Naive thymus-derived CD4-positive, alpha-beta T cell (primary cell): ENCODE measurements at regions of chr9 and their contacts with region 1.

Region 1: GRCh38 chr9:105881654-105882349 is 187.5 kb downstream of the TMEM38B start:
- DNase-seq: peak; percentile 16 to 64 (median 52)
- ATAC-seq: peak; percentile 65
- H3K4me3 ChIP-seq: no peak overlapping the region
- H3K4me3 Mint-ChIP-seq: no peak overlapping the region
- H3K27ac ChIP-seq: no peak overlapping the region
- H3K27ac Mint-ChIP-seq: no peak overlapping the region
- H3K4me1 ChIP-seq: no peaks in the 10 kb centered on the region
- H3K4me1 Mint-ChIP-seq: peaks cover 0 to 26% (median 4%) of the 10 kb centered on the region in 7 donors
- H3K27me3 ChIP-seq: no peaks in the 10 kb centered on the region
- H3K27me3 Mint-ChIP-seq: peaks cover 4 to 39% (median 10%) of the 10 kb centered on the region in 5 donors

Region 2: DNA sequence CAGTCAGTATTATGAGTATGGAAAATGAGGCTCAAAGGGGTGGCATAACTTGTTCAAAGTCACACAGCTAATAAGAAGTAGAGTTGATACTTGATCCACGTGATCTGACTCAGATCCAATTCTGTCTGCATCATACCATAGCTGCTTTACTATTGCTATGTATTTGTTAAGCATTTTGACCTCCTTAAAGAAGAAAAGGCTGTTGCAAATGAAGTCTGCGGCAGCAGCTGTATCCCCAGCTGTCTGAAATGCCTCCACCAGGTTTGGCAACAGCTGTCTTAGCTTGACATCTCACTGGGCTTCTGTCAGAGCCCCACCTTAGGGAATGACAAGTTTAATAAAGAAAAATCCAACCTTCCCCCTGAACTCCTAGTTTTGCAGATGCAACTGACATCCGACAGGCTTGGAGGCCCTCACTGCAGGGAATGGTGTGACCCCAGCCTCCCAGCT is 712.9 kb before region 1 on chr9:
- CTCF ChIA-PET with region 1: no interaction called
- POLR2A ChIA-PET with region 1: no interaction called
- intact Hi-C with region 1: no loop called
- DNase-seq: no peak
- ATAC-seq: no peak
- H3K4me3 ChIP-seq: no peak overlapping the region
- H3K4me3 Mint-ChIP-seq: no peak overlapping the region
- H3K27ac ChIP-seq: no peak overlapping the region
- H3K27ac Mint-ChIP-seq: no peak overlapping the region
- H3K4me1 ChIP-seq: no peaks in the 10 kb centered on the region
- H3K4me1 Mint-ChIP-seq: no peaks in the 10 kb centered on the region
- H3K27me3 ChIP-seq: no peaks in the 10 kb centered on the region
- H3K27me3 Mint-ChIP-seq: peaks cover 0 to 5% (median 0%) of the 10 kb centered on the region in 5 donors

Region 3: DNA sequence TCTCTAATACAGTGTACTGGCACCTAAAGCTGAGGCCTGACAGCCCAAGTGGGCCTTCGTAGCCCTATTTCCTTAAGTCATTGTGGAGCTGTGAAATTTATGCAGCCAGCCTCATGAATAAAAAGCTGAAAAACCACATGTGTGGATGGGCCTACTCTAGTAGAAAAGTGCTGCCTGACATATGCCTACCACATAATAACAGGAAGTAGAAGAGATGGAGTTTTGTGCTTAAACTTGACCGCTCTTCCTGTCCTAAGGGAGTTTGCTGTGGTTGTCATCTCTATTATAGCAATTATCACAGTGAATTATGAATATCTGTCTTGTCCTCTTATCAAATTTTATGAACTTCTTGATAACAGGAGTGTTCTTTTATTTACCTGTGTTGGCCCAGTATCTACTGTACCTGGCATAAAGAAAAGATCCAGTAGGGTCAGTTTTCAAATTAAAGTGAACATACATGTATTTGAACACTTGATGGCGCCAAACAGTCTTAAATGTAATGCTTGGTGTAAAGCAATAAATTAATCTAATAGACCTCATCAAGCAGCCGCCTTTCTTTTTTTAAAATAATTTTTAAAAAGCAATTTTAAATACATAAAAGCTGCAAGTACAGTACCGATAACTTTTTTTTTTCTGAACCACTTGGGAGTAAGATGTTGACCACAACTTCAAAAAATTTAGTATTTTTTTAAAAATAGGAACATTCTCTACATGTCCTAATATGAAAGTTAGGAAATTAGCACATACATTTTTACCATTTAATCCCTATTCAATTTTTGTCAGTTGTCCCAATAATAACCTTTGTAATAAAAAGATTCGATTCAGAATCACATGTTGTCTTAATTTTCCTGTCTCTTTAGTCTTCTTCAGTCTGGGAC is 272.8 kb before region 1 on chr9:
- CTCF ChIA-PET with region 1: interaction called, 3 read pairs
- POLR2A ChIA-PET with region 1: no interaction called
- intact Hi-C with region 1: loop called in 1 of 2 experiments (anchors 1 kb)
- DNase-seq: peak in 6 of 9 donors; percentile 11 to 37 (median 30)
- ATAC-seq: peak; percentile 67
- H3K4me3 ChIP-seq: no peak overlapping the region
- H3K4me3 Mint-ChIP-seq: no peak overlapping the region
- H3K27ac ChIP-seq: no peak overlapping the region
- H3K27ac Mint-ChIP-seq: no peak overlapping the region
- H3K4me1 ChIP-seq: no peaks in the 10 kb centered on the region
- H3K4me1 Mint-ChIP-seq: peaks cover 0 to 5% (median 0%) of the 10 kb centered on the region in 7 donors
- H3K27me3 ChIP-seq: no peaks in the 10 kb centered on the region
- H3K27me3 Mint-ChIP-seq: no peaks in the 10 kb centered on the region

Region 4: DNA sequence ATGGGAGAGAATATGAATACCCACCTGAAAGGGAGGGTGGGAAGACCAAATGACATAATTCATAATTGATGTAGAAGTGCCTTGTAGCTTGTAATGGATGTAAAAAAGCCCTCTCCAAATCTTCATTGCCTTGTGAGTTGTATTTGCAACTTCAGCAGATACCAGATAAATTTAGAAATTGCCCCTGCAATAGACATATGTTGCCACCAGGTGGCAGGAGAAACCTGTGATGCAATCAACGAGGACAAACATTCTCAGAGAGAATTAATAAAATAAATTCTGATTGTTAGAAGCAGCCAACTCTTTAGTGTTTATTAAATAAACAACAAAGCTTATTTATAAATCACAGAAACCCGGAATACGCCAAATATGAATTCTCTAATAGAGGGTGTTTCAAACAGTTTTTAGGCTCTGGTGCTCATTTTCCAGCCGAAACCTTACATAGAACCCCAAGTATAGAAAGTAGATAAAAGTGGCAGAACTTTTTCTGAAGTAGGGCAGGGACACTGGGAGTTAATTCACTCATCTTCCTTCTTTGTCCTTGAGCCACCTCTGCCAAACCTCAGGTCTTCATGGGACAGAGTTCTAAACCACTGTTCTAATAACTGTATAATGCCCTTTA is 39.7 kb before region 1 on chr9:
- CTCF ChIA-PET with region 1: interaction called, 37 read pairs
- POLR2A ChIA-PET with region 1: no interaction called
- intact Hi-C with region 1: loop called (anchors 1 kb)
- DNase-seq: peak in 6 of 9 donors; percentile 4 to 36 (median 26)
- ATAC-seq: no peak
- H3K4me3 ChIP-seq: no peak overlapping the region
- H3K4me3 Mint-ChIP-seq: no peak overlapping the region
- H3K27ac ChIP-seq: no peak overlapping the region
- H3K27ac Mint-ChIP-seq: no peak overlapping the region
- H3K4me1 ChIP-seq: no peaks in the 10 kb centered on the region
- H3K4me1 Mint-ChIP-seq: peaks cover 0 to 4% (median 0%) of the 10 kb centered on the region in 7 donors
- H3K27me3 ChIP-seq: no peaks in the 10 kb centered on the region
- H3K27me3 Mint-ChIP-seq: peaks cover 0 to 4% (median 0%) of the 10 kb centered on the region in 5 donors

Region 5: DNA sequence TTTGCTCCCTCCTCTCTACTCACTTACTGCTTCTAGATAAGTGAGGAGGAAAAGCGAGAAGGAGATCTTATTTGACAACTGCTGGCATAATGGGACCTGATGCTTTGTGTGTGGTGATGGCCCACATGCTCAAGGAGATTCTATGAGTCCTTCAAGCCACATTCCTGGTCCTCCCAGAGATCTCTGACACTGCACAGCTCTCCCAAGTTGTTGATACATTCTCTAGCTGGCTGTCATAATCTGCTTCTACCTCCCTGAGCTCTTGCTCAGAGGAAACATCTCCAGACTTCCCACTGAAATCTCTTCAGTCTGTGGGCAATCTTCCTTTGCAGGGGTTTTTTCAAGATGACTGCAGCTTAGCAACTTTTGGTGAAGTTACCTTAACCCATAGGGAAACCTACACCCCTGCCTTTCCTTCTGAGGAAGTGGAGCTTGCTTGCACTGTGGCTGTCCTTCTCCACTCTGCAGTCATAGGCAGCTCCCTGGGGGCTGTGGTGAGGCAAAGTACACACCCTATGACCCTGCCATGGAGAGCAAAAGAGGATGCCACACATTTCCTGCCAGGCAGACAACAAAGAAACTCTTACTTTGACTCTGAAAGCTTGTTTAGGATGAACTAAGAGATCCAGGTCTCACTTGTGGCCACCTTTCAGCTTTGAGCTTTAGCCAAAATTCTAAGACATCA is 23.7 kb before region 1 on chr9:
- CTCF ChIA-PET with region 1: interaction called, 6 read pairs
- POLR2A ChIA-PET with region 1: no interaction called
- intact Hi-C with region 1: loop called in 1 of 2 experiments (anchors 1 kb)
- DNase-seq: peak in 6 of 9 donors; percentile 8 to 52 (median 26)
- ATAC-seq: peak; percentile 64
- H3K4me3 ChIP-seq: no peak overlapping the region
- H3K4me3 Mint-ChIP-seq: peak overlapping the region in 9 of 10 donors; percentile 4 to 80 (median 18)
- H3K27ac ChIP-seq: no peak overlapping the region
- H3K27ac Mint-ChIP-seq: peak overlapping the region; percentile 6 to 82 (median 58)
- H3K4me1 ChIP-seq: peaks cover 0 to 21% of the 10 kb centered on the region in 2 donors
- H3K4me1 Mint-ChIP-seq: peaks cover 23 to 34% (median 33%) of the 10 kb centered on the region in 7 donors
- H3K27me3 ChIP-seq: no peaks in the 10 kb centered on the region
- H3K27me3 Mint-ChIP-seq: peaks cover 0 to 13% (median 0%) of the 10 kb centered on the region in 5 donors

Region 6: GRCh38 chr9:105973951-105974351 is 92.1 kb after region 1 on chr9:
- CTCF ChIA-PET with region 1: no interaction called
- POLR2A ChIA-PET with region 1: no interaction called
- intact Hi-C with region 1: no loop called
- DNase-seq: no peak
- ATAC-seq: no peak
- H3K4me3 ChIP-seq: no peak overlapping the region
- H3K4me3 Mint-ChIP-seq: no peak overlapping the region
- H3K27ac ChIP-seq: no peak overlapping the region
- H3K27ac Mint-ChIP-seq: no peak overlapping the region
- H3K4me1 ChIP-seq: no peaks in the 10 kb centered on the region
- H3K4me1 Mint-ChIP-seq: no peaks in the 10 kb centered on the region
- H3K27me3 ChIP-seq: no peaks in the 10 kb centered on the region
- H3K27me3 Mint-ChIP-seq: peaks cover 0 to 8% (median 0%) of the 10 kb centered on the region in 5 donors